ENCODE measurements at regions of chr5 and their contacts with region 1.

Region 1: DNA sequence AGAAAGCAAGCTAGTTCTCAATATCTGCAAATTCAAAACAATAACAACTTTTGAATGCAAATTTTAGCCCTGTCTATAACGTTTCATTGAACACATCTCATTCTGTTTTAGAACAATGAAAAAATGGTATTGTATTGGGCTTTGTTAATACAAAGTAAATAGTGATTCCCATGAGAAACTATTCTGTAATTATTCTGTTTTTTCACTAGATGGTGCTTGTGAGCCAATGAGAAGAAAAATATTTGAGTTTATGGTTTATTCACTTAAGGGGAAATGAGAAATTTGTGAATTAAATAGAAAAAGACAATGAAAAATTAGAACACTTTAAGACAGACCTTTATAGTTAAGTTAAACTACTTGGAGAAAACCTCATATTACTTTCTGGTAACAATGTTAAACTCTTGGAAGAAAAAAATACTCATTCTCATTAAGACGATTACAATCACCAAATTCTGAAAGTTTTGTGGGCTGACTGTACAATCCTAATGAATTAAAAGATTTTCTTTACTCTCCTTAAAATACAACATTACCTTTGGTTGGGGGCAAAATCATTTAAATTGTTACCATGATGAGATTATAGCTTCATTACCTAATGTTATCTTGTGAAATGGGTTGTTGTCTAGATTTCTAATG is 127.0 kb downstream of the NNT start:
- DNase-seq: no peak
- H3K4me3 Mint-ChIP-seq: no peak overlapping the region
- H3K27ac Mint-ChIP-seq: no peak overlapping the region
- H3K4me1 Mint-ChIP-seq: peaks cover 15% of the 10 kb centered on the region
- H3K27me3 Mint-ChIP-seq: no peaks in the 10 kb centered on the region
- CTCF ChIP-seq: peak; percentile 56

Region 2: DNA sequence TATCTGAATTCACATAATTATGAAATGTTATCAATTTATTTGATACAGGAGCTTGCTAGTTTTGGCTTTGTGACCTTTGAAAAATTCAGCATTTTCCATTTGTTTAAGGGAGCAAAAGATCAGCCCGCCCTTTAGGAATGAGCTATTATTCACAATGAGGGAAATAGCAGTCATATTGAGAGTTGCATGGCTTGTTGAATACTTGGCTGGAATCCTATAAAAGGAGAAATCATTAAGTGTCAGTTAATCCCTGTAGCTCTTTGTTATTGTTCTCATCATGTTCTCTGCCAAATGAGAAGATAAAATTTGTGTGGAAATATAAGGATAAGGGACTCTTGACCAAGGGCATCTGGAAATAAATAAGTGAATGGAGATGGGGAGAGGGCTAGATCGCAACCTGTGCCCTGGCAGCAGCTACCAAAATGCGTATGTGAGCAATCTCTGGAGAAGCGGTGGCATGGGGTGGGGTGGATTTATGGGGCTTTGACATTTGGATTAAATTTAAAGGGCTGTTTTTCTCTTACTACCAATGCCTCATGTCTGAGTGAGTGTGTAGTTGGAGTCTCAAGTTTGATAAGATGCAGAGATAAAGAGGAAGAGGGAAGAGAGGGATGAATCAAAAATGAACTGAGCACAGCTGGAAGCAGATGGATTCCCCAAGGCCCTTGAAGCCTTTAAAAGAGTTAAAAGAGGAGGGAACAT is 110.6 kb after region 1 on chr5:
- CTCF ChIA-PET with region 1: no interaction called
- intact Hi-C with region 1: loop called (anchors 5 kb)
- DNase-seq: no peak
- H3K4me3 Mint-ChIP-seq: no peak overlapping the region
- H3K27ac Mint-ChIP-seq: no peak overlapping the region
- H3K4me1 Mint-ChIP-seq: no peaks in the 10 kb centered on the region
- H3K27me3 Mint-ChIP-seq: no peaks in the 10 kb centered on the region
- CTCF ChIP-seq: no peak

Region 3: DNA sequence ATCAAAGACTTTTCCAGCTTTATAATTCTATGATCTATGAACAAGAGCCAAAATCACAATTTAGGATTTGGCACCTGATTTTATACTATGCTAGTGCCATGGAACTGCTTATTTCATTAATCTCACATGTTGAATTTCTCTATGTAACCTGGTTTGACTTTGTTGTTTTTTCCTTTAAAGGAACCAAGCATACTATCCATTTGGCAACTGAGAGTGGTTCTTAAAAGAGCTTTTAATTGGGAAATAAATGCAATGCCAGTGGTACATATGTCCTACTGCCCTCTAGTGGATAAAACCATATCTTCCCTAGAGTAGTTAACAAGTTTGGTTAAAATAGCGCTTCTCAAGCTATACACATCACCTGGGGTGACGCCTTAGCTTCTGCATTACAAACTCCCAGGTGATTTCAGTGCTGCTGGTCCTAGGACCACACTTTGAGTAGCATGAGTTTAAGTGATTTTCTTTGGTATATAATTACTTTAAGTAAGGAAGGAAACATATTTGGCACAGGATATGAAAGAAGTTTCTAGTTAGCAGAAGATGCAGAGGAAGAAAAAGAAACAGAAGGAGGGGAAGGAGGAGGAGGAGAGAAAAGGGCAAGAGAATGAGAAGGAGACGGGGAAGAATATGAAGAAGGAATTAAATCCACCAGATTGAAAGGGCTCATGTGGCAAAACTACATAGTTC is 602.5 kb after region 1 on chr5:
- CTCF ChIA-PET with region 1: interaction called, 22 read pairs
- intact Hi-C with region 1: loop called (anchors 1 kb)
- DNase-seq: peak; percentile 3
- H3K4me3 Mint-ChIP-seq: no peak overlapping the region
- H3K27ac Mint-ChIP-seq: no peak overlapping the region
- H3K4me1 Mint-ChIP-seq: no peaks in the 10 kb centered on the region
- H3K27me3 Mint-ChIP-seq: no peaks in the 10 kb centered on the region
- CTCF ChIP-seq: peak; percentile 39

Region 4: GRCh38 chr5:44536650-44537260 is 806.8 kb after region 1 on chr5:
- CTCF ChIA-PET with region 1: no interaction called
- intact Hi-C with region 1: loop called (anchors 10 kb)
- DNase-seq: peak; percentile 67
- H3K4me3 Mint-ChIP-seq: no peak overlapping the region
- H3K27ac Mint-ChIP-seq: no peak overlapping the region
- H3K4me1 Mint-ChIP-seq: no peaks in the 10 kb centered on the region
- H3K27me3 Mint-ChIP-seq: no peaks in the 10 kb centered on the region
- CTCF ChIP-seq: peak; percentile 71

Region 5: GRCh38 chr5:44774279-44774880 is 1044.4 kb after region 1 on chr5:
- CTCF ChIA-PET with region 1: no interaction called
- intact Hi-C with region 1: loop called (anchors 5 kb)
- DNase-seq: no peak
- H3K4me3 Mint-ChIP-seq: no peak overlapping the region
- H3K27ac Mint-ChIP-seq: no peak overlapping the region
- H3K4me1 Mint-ChIP-seq: no peaks in the 10 kb centered on the region
- H3K27me3 Mint-ChIP-seq: no peaks in the 10 kb centered on the region
- CTCF ChIP-seq: peak; percentile 53

Measured in Calu3 (cell line).